Left cardiac atrium (tissue), 4 donors: ENCODE measurements at regions of chr12 and their contacts with region 1.

Region 1: DNA sequence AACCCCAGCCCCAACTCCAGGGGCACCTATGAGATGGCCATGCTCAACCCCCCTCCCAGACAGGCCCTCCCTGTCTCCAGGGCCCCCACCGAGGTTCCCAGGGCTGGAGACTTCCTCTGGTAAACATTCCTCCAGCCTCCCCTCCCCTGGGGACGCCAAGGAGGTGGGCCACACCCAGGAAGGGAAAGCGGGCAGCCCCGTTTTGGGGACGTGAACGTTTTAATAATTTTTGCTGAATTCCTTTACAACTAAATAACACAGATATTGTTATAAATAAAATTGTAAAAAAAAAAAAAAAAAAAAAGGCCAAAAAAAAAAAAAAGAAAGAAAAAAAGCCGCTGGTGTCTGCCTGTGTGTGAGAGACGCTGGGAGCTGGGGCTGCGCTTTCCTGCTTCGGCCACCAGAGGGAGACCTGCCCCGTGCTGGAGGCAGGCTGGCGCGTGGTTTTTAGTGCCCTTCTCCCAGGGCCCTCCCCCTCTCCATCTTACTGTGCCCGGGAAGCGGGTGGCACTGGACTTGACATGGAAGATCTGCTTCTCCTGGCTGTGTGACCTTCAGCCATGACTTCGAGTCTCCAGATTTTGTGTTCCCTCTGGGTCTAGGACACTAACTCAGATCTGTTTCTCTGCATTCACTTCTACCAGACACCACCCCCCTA is 3.4 kb upstream of the NXPH4 start:
- DNase-seq: peak; percentile 88
- ATAC-seq: peak; percentile 65 to 68

Region 2: DNA sequence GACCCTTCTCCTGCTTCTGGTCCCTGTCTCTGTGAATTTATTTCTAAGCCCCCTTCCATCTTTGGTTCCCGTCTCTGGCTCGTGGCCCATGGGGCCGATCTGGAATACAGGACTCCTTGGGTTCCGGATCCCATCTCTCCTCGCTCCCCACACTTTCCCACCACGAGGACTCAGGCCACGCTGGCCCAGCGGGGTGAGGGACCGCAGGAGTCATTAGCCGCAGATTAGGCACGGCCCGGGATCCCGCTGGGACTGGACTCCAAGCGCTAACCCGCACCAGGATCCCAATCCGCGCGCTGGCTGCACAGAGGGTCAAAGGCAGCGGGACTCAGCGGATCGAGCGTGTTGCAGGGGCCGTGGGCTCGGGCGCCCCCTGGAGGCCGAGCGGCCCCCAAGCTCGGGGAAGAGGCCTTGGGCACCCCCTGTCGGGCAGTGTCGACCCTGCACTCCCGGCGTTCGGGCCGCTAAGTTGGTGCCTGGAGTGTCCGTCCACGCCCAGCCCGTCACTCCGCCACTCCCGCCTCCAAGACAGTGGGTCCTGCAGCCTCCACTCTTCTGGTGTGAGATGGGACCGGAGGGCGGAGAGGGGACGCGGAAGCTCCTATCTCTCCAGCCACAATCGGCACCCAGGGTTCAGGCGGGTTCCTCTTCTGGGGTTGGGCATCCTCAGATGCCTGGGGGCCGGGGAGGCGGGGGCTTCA is 25.8 kb after region 1 on chr12:
- intact Hi-C with region 1: loop called in 1 of 2 experiments (anchors 1 kb)
- DNase-seq: peak; percentile 88
- ATAC-seq: peak; percentile 63 to 76

Region 3: GRCh38 chr12:57459055-57459749 is 246.0 kb after region 1 on chr12:
- intact Hi-C with region 1: loop called in 1 of 2 experiments (anchors 5 kb)
- DNase-seq: peak; percentile 94
- ATAC-seq: peak; percentile 78